Endothelial cell of umbilical vein (primary cell): ENCODE measurements at regions of chr12 and their contacts with region 1.

Region 1: GRCh38 chr12:2640705-2641104 is 154.1 kb upstream of the FKBP4 start:
- DNase-seq: peak; percentile 93
- H3K4me3 ChIP-seq: no peak overlapping the region
- H3K27ac ChIP-seq: peak overlapping the region; percentile 88
- H3K4me1 ChIP-seq: peaks cover 17% of the 10 kb centered on the region
- H3K27me3 ChIP-seq: peaks cover 2 to 6% of the 10 kb centered on the region in 2 experiments
- CTCF ChIP-seq: no peak
- POLR2A ChIP-seq: no peak

Region 2: DNA sequence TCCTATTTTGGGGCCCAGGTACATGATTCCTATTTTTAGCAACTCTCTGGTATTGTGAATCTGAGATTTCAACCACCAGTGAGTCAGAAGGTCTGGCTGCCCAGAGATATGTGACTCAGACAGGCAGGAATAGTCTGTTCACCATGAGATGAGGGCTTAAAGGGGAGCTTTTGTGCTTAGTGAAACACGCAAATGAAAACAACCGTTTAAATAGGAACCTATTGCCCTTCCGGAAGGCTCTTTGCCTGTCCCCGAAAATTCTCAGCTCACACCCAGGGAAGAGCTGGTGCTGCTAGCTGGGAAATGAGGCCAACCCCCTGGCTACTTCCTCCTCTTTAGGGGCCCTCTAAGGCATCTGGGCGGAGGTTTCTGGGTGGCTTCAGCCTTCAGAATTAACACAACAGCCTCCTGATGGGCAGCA is 304.3 kb before region 1 on chr12:
- CTCF ChIA-PET with region 1: no interaction called
- POLR2A ChIA-PET with region 1: no interaction called
- dilution Hi-C with region 1: no loop called
- intact Hi-C with region 1: loop called (anchors 2 kb)
- DNase-seq: peak; percentile 86
- H3K4me3 ChIP-seq: no peak overlapping the region
- H3K27ac ChIP-seq: peak overlapping the region; percentile 87
- H3K4me1 ChIP-seq: peaks cover 41% of the 10 kb centered on the region
- H3K27me3 ChIP-seq: no peaks in the 10 kb centered on the region
- CTCF ChIP-seq: no peak
- POLR2A ChIP-seq: peak; percentile 28

Region 3: DNA sequence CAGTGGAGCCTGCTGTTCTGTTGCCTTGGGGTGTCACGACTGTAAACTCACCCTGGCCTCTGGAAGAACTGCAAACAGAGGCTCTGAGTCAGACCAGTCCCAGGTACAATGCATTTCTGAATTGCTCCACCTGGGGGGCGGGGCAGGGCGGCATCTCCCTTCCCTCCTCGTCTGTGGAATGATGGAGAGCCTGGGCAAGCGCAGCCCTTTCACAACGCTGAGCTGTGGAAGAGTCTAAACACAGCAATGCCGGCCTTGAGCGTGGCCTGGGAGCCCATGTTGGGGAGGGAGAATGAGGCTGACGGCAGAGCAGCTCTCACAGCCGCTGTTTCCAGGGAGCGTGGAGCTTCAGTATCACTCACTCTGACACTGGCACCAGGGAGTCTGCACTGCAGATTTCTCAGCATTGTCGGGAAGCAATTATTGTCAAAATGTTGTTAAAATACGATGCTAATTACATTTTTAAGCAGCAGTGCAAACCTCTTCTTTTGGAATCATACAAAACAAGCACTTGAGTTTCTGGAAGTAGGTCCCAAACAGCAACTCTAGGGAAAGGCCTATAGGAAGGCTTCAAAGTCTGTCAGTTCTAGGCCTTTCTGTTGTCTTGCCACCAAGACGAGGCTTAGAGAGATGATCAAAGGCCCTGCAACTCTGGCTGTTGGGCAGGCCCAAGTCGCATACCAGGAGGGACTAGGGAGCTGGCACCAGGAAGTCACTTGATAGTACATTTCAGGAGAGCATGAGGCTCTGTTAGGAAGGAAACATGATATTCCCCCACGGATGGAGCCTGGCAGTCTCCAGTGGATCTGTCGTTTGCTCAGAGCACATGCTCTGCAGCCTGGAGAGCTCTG is 89.9 kb before region 1 on chr12:
- CTCF ChIA-PET with region 1: no interaction called
- POLR2A ChIA-PET with region 1: no interaction called
- dilution Hi-C with region 1: no loop called
- intact Hi-C with region 1: no loop called
- DNase-seq: no peak
- H3K4me3 ChIP-seq: no peak overlapping the region
- H3K27ac ChIP-seq: no peak overlapping the region
- H3K4me1 ChIP-seq: no peaks in the 10 kb centered on the region
- H3K27me3 ChIP-seq: no peaks in the 10 kb centered on the region
- CTCF ChIP-seq: no peak
- POLR2A ChIP-seq: no peak

Region 4: DNA sequence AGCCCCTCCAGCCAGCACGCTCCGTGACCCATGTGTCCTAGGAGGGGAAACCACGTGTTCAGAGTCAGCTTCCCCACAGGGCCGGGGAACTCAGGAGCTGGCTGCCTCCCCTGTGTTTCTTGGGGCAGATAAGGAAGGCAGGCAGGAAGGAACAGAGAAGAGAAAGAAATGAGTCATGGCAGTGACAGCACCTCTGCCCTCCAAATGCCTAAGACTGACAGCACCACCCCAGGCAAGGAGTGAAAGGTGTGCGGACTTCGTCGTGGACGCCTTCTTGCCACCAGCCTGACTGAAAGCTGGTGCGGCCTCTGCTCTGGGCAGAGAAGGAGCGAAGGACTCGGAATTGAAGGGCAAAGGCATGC is 12.9 kb before region 1 on chr12:
- CTCF ChIA-PET with region 1: interaction called, 11 read pairs
- POLR2A ChIA-PET with region 1: no interaction called
- dilution Hi-C with region 1: no loop called
- intact Hi-C with region 1: no loop called
- DNase-seq: no peak
- H3K4me3 ChIP-seq: no peak overlapping the region
- H3K27ac ChIP-seq: no peak overlapping the region
- H3K4me1 ChIP-seq: no peaks in the 10 kb centered on the region
- H3K27me3 ChIP-seq: peaks cover 0 to 2% of the 10 kb centered on the region in 2 experiments
- CTCF ChIP-seq: no peak
- POLR2A ChIP-seq: no peak

Region 5: DNA sequence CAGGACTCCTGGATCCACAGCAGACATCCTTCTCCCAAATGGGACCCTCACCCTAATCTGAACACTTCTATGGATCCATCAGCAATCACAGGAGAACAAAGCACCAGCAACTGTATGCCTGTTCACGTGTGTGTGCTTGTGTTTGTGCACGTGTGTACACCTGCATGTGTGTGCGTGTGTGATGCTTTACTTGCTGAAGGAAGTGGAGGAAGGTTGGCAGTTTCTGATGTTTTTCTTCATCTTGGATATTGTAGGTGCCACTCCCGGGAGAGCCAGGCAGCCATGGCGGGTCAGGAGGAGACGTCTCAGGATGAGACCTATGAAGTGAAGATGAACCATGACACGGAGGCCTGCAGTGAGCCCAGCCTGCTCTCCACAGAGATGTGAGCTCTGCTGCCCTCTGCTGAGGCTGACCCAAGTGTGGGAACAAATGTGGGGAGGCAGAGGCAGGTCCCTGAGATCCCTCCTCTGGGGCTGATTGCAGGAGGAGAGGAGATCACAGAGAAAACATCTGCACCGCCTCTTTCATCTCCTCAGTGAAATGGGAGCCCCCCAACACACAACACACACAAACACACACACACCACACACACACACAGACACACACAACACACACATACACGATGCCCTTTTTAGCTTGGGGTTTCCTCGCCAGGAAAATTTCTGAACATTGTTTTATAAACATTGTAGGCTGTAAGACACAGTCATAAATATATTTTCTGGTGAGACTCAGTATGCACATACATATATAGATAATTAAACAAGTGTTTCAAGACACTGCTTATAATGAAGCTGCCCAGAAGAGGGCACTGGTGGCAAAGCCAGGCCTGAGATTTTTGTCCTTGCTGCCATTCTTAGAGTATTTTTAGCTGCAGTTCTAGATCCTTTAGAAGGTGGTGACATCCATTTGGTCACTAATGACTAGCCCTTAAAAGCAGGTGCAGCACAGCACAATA is 41.9 kb after region 1 on chr12:
- CTCF ChIA-PET with region 1: interaction called, 14 read pairs
- POLR2A ChIA-PET with region 1: no interaction called
- dilution Hi-C with region 1: no loop called
- intact Hi-C with region 1: loop called (anchors 1 kb)
- DNase-seq: peak; percentile 30
- H3K4me3 ChIP-seq: no peak overlapping the region
- H3K27ac ChIP-seq: no peak overlapping the region
- H3K4me1 ChIP-seq: no peaks in the 10 kb centered on the region
- H3K27me3 ChIP-seq: no peaks in the 10 kb centered on the region
- CTCF ChIP-seq: peak in 1 of 2 donors; percentile 20
- POLR2A ChIP-seq: no peak

Region 6: DNA sequence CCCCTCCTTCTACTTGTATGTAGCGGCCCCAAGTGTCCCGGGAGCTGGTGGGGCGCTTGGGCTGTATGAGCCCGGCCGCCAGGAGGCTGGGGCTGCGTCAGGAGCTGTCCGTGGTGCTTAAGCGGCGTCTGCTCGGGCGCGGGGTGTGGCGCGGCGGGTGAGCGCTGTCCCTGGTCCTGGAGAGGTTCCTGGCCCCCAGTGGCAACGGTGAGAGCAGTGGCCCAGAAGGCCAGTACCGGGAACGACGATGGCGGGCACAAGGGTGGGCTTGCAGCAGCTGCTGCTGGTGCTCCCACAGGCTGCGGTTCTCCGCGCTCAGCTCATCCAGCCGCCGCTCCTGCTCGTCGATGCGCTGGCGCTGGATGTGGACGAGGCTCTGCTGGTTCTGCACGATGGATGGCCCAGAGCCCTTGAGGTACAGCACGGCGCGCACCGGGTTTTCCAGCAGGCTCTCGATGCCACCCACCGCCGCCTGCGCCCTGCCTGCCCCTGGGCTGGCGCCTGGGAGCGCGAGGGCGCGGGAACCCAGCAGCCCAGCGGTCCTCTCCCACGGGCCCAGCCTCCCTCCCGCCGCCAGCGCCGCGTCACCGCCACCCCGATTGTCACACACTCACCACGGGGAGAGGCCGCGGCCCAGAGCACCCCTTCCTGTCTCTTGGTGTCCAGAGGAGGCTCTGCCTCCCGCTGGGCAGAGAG is 112.1 kb after region 1 on chr12:
- CTCF ChIA-PET with region 1: interaction called, 3 read pairs
- POLR2A ChIA-PET with region 1: no interaction called
- dilution Hi-C with region 1: no loop called
- intact Hi-C with region 1: loop called (anchors 2 kb)
- DNase-seq: peak; percentile 69
- H3K4me3 ChIP-seq: no peak overlapping the region
- H3K27ac ChIP-seq: no peak overlapping the region
- H3K4me1 ChIP-seq: no peaks in the 10 kb centered on the region
- H3K27me3 ChIP-seq: peaks cover 0 to 5% of the 10 kb centered on the region in 2 experiments
- CTCF ChIP-seq: no peak
- POLR2A ChIP-seq: no peak

Region 7: GRCh38 chr12:2949411-2949810 is 308.7 kb after region 1 on chr12:
- CTCF ChIA-PET with region 1: no interaction called
- POLR2A ChIA-PET with region 1: no interaction called
- dilution Hi-C with region 1: no loop called
- intact Hi-C with region 1: no loop called
- DNase-seq: no peak
- H3K4me3 ChIP-seq: no peak overlapping the region
- H3K27ac ChIP-seq: no peak overlapping the region
- H3K4me1 ChIP-seq: peaks cover 3% of the 10 kb centered on the region
- H3K27me3 ChIP-seq: no peaks in the 10 kb centered on the region
- CTCF ChIP-seq: no peak
- POLR2A ChIP-seq: no peak